Tibial artery (tissue), 4 donors: ENCODE measurements at regions of chr20 and their contacts with region 1.

Region 1: GRCh38 chr20:62197801-62198200 is 15.0 kb downstream of the MTG2 start:
- DNase-seq: no peak
- H3K4me3 ChIP-seq: no peak overlapping the region
- H3K27ac ChIP-seq: no peak overlapping the region
- H3K4me1 ChIP-seq: no peaks in the 10 kb centered on the region
- H3K27me3 ChIP-seq: no peaks in the 10 kb centered on the region
- CTCF ChIP-seq: no peak

Region 2: GRCh38 chr20:61965606-61966491 is 232.0 kb before region 1 on chr20:
- intact Hi-C with region 1: no loop called
- DNase-seq: no peak
- H3K4me3 ChIP-seq: no peak overlapping the region
- H3K27ac ChIP-seq: no peak overlapping the region
- H3K4me1 ChIP-seq: peaks cover 0 to 10% (median 0%) of the 10 kb centered on the region in 4 donors
- H3K27me3 ChIP-seq: peaks cover 0 to 33% of the 10 kb centered on the region in 2 donors
- CTCF ChIP-seq: no peak

Region 3: DNA sequence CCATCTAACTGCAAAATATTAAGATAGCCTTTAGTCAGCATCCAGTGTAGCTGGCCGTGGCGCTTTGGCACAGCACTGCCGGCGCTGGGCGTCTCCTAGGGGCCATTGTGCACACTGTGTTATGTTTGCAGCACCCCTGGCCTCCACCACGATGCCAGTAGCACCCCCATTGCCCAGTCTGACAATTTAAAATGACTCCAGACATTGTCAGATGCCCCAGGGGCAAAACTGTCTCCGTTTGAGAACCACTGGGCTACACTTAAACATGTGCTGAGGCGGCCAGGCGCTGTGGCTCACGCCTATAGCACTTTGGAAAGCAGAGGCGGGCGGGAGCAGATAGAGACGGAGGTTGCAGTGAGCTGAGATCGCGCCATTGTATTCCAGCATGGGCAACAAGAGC is 20.9 kb before region 1 on chr20:
- intact Hi-C with region 1: loop called (anchors 1 kb)
- DNase-seq: no peak
- H3K4me3 ChIP-seq: no peak overlapping the region
- H3K27ac ChIP-seq: no peak overlapping the region
- H3K4me1 ChIP-seq: peaks cover 0 to under 1% (median 0%) of the 10 kb centered on the region in 4 donors
- H3K27me3 ChIP-seq: no peaks in the 10 kb centered on the region
- CTCF ChIP-seq: no peak